ENCODE measurements at regions of chr6 and their contacts with region 1.

Region 1: DNA sequence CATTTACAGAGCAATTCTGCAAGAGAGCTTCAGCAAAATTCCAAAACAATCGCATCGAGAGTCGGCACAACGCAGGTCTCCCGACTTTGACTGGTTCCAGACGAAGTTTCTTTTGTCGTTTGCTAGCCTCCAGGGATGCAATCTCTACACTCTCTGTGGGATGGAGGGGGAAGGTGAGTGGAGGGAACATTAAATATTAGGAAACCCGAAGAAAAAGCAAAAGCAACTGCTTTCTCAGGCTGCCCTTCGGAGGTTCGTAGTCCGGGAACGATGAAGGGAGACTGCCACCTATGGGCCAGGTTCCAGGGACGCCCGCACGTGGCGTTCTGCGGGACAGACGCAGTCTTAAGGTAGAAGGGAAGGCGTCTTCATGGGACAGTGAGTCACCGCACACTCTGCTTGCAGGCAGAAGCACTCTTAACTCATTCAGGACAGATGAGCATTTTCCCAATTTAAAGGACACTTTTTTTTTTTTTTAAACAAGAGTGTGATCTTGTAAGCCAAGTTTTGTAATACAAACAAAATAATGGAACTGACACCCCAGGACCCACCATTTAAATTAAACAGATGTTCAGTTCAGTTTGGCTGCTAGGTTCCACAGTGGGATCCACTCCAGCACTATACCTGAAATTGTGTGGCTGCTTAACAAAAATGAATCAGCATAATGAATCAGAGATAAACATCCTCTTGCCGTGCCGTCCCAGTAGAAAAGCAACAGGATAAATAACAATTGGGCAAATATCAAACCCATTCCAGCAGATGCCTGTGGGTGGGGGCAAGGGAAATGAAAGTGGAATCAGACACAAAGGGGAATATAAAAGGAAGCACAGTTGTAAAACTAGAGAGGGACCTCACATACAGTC is 65.8 kb upstream of the ARMC2 start:
- DNase-seq: peak; percentile 68 to 89 (median 79)
- ATAC-seq: peak; percentile 99
- H3K4me3 ChIP-seq: no peak overlapping the region
- H3K27ac ChIP-seq: no peak overlapping the region
- H3K4me1 ChIP-seq: peaks cover 0 to 9% of the 10 kb centered on the region in 2 experiments; a peak in 2 of 5 replicates
- H3K27me3 ChIP-seq: peaks cover 16 to 28% of the 10 kb centered on the region in 2 experiments
- CTCF ChIP-seq: peak; percentile 92 to 94 (median 93)
- EP300 ChIP-seq: 0 out of 2 replicates have a peak, but pooled peaks have one; percentile 8
- POLR2A ChIP-seq: no peak
- RAD21 ChIP-seq: peak; percentile 92 to 95

Region 2: DNA sequence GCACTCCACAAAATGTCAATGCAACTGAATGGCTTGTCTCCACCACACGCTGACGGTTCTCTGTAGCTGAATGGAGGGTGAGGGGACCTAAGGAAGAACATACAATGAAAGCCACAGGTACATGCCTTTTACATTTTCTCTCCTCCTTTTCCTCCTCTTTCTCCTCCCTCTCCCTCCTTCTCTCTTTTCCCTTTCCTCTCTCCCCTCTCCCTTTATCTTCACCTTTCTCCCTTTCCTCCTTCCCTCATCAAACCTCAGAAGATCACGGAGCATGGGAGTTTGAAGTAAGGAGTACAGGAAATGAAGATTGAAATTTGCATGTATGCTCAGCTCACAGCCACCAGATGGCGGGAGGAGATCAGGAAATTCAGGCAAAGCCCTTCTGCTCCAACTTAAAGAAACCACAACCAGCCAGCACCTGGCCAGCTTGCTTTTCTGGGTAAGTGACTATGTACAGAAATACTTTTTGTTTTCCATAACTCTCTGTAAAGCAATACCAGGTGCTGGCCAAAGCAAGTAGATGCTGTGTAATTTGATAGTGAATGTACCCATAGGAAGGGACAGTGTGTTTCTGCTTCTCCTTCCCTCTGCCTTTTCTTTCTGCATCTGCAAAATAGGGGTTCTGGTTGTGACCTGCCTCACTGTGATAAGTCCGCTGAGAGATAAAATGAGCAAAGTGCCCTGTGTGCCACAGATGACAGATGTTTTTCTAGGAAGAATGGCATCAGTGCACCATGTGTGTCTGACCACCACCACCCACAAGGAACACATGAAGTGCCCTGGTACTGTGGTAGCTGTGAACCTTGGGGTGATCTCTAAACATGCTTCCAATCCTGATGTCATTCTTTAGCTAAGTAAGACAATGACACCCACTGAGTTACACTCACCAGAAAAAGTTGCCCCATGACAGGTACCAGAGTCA is 240.3 kb before region 1 on chr6:
- CTCF ChIA-PET with region 1: interaction called, 13 read pairs
- POLR2A ChIA-PET with region 1: interaction called, 3 read pairs
- in situ Hi-C with region 1: loop called (anchors 5 kb)
- intact Hi-C with region 1: loop called (anchors 1 kb)
- DNase-seq: peak; percentile 64 to 81 (median 64)
- ATAC-seq: peak; percentile 94
- H3K4me3 ChIP-seq: no peak overlapping the region
- H3K27ac ChIP-seq: no peak overlapping the region
- H3K4me1 ChIP-seq: no peaks in the 10 kb centered on the region
- H3K27me3 ChIP-seq: 0 out of 5 replicates have a peak, but pooled peaks cover 0 to 4% of the 10 kb centered on the region in 2 experiments
- CTCF ChIP-seq: peak; percentile 83 to 96 (median 87)
- EP300 ChIP-seq: no peak
- POLR2A ChIP-seq: no peak
- RAD21 ChIP-seq: peak; percentile 98 to 99

Region 3: DNA sequence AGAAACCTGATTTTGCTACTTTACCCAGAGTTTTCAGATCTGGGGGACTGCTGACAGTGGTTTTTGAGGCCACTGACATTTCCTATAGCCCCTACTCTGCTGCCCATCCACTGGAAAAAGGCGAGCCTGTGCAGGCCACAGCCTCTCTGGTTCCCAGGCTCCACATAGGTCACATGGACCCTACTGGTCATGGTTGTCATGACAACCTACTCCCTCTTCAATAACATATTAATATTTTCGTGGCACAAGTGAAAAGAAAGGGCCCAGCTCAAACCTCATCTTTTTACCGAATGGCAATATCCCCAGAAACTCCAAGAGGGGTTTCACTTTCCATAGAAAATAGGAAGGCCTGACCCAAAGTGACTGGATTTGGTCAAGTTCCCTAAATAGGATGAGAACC is 232.7 kb before region 1 on chr6:
- CTCF ChIA-PET with region 1: no interaction called
- POLR2A ChIA-PET with region 1: no interaction called
- in situ Hi-C with region 1: loop called (anchors 5 kb)
- intact Hi-C with region 1: no loop called
- DNase-seq: peak in 2 of 4 experiments; percentile 59 to 66
- ATAC-seq: 0 out of 3 replicates have a peak, but pooled peaks have one; percentile 32
- H3K4me3 ChIP-seq: no peak overlapping the region
- H3K27ac ChIP-seq: no peak overlapping the region
- H3K4me1 ChIP-seq: no peaks in the 10 kb centered on the region
- H3K27me3 ChIP-seq: no peaks in the 10 kb centered on the region
- CTCF ChIP-seq: no peak
- EP300 ChIP-seq: no peak
- POLR2A ChIP-seq: no peak
- RAD21 ChIP-seq: no peak

Region 4: DNA sequence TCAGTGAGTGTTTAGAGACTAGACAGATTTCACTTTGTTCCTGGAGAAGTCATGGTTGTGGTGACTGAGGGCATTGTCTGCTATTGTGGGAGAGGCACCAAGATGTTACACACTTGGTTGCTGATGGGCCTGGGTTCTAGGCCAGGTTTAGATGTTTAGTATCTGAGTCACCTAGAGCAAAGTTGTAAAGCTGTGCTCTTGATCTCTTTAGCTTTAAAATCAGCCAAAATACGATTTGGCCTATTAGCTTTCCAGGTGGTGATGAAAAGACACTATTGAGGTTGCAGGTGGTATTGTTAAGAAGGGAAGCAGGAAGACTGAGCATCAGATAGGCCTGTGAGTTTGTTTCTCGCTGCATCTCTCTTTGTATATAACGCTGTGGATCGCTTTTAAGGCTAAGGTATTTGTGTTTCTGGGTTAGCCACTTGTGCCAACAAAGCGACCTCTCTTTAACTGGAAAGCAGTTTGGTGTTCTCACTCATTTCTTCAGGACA is 173.1 kb before region 1 on chr6:
- CTCF ChIA-PET with region 1: no interaction called
- POLR2A ChIA-PET with region 1: no interaction called
- in situ Hi-C with region 1: no loop called
- intact Hi-C with region 1: no loop called
- DNase-seq: no peak
- ATAC-seq: no peak; the same call in 2 of the 3 replicates
- H3K4me3 ChIP-seq: no peak overlapping the region
- H3K27ac ChIP-seq: no peak overlapping the region
- H3K4me1 ChIP-seq: peaks cover 0 to 18% of the 10 kb centered on the region in 2 experiments; a peak in 2 of 5 replicates
- H3K27me3 ChIP-seq: no peaks in the 10 kb centered on the region
- CTCF ChIP-seq: no peak
- EP300 ChIP-seq: no peak
- POLR2A ChIP-seq: no peak
- RAD21 ChIP-seq: no peak

Region 5: DNA sequence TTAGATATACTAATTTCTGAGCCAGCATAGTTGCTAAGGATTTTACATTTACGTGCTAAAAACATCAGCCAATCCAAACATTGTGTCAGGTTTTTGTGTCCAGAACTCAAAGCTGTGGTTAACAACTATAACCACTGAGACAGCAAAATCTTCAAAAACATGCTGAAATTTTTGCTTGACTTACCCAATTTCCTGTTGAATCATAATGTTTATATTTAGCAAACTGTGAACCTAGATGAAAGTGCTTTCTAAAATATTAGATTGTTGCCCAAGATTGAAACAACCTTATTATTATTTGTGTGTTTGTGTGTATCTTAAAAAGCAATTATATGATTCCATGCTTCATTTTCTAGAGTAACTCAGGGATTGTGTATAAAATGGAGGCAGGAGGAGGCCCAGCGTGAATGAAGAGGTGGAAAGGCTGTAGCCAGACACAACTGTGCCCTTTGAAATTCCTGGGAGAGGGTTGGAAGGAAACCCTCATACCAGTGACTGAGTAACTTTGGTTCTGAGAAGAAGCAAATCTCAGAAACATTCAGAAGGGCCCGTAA is 113.8 kb after region 1 on chr6:
- CTCF ChIA-PET with region 1: no interaction called
- POLR2A ChIA-PET with region 1: no interaction called
- in situ Hi-C with region 1: no loop called
- intact Hi-C with region 1: loop called (anchors 10 kb)
- DNase-seq: no peak
- ATAC-seq: no peak
- H3K4me3 ChIP-seq: no peak overlapping the region
- H3K27ac ChIP-seq: no peak overlapping the region
- H3K4me1 ChIP-seq: no peaks in the 10 kb centered on the region
- H3K27me3 ChIP-seq: peaks cover 6 to 9% of the 10 kb centered on the region in 2 experiments; a peak in 3 of 5 replicates
- CTCF ChIP-seq: no peak
- EP300 ChIP-seq: no peak
- POLR2A ChIP-seq: no peak
- RAD21 ChIP-seq: no peak